K562 (cell line): ENCODE measurements at regions of chr2 and their contacts with region 1.

Region 1: GRCh38 chr2:241877989-241878970 is 8.8 kb downstream of the RTP5 start:
- DNase-seq: peak; percentile 62 to 85 (median 70)
- ATAC-seq: peak; percentile 59
- H3K4me3 ChIP-seq: no peak overlapping the region
- H3K27ac ChIP-seq: no peak overlapping the region
- H3K4me1 ChIP-seq: peaks cover 14 to 48% of the 10 kb centered on the region in 2 experiments; a peak in 4 of 5 replicates
- H3K27me3 ChIP-seq: no peaks in the 10 kb centered on the region
- CTCF ChIP-seq: peak; percentile 52 to 81 (median 67)
- EP300 ChIP-seq: no peak
- POLR2A ChIP-seq: no peak
- RAD21 ChIP-seq: peak; percentile 48 to 64

Region 2: DNA sequence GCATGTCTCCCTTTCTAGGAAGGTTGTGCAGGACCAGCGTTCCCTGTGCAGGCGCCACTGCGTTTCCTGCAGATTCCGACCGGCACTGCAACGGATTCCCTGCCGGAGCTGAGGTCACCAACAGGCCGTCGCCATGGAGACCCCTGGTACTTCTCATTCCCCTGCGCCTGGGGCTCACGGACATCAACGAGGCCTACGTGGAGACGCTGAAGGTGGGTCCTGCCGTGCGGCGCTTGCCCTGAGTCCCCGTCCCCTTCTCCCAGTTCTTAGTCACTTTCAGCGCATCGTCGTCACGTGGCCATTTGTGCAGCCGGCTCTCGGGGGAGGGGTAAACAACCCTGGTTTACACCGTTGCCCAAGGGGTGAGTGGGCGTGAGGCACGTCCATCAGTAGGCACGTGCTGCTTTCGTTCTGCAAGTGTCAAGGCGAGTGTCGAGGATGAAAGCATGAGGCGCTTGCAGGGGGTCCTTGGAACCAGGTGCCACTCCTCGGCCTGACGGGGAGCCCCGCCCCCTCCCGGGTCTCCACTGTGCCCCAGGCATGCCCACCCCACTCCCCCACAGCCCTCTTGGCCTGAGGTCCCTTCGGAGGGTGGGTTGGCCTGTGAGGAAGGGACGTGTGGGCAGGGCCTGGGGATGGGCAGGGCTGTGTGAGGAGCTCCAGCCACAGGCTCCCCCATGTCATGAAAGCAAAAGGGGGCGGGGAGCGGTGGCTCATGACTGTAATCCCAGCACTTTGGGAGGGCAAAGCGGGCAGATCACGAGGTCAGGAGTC is 211.5 kb before region 1 on chr2:
- CTCF ChIA-PET with region 1: no interaction called
- POLR2A ChIA-PET with region 1: no interaction called
- in situ Hi-C with region 1: no loop called
- intact Hi-C with region 1: loop called (anchors 5 kb)
- DNase-seq: no peak
- ATAC-seq: no peak
- H3K4me3 ChIP-seq: no peak overlapping the region
- H3K27ac ChIP-seq: no peak overlapping the region
- H3K4me1 ChIP-seq: peaks cover 0 to 5% of the 10 kb centered on the region in 2 experiments; a peak in 3 of 5 replicates
- H3K27me3 ChIP-seq: no peaks in the 10 kb centered on the region
- CTCF ChIP-seq: no peak
- EP300 ChIP-seq: no peak
- POLR2A ChIP-seq: no peak
- RAD21 ChIP-seq: no peak

Region 3: DNA sequence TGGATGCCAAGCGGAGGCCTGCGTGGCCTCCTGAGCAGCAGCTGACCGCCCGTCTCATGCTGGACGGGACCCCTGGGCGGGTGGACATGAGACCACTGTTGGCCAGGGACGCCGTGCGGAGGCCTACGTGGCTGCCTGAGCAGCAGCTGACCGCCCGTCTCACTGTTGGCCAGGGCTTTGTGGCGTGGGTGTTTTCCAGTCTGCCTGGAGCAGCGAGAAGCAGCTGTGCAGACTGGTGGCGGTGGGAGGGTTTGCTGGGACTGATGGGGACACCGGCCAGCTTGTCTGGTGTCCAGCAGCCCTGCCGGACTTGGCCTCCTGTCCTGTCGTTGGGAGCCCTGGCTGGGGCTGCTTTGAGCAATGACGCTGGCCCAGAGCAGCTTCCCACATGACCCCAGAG is 149.7 kb before region 1 on chr2:
- CTCF ChIA-PET with region 1: no interaction called
- POLR2A ChIA-PET with region 1: no interaction called
- in situ Hi-C with region 1: loop called (anchors 5 kb)
- intact Hi-C with region 1: loop called (anchors 5 kb)
- DNase-seq: no peak
- ATAC-seq: no peak
- H3K4me3 ChIP-seq: no peak overlapping the region
- H3K27ac ChIP-seq: no peak overlapping the region
- H3K4me1 ChIP-seq: peaks cover 4 to 21% of the 10 kb centered on the region in 2 experiments; a peak in 3 of 5 replicates
- H3K27me3 ChIP-seq: no peaks in the 10 kb centered on the region
- CTCF ChIP-seq: no peak
- EP300 ChIP-seq: no peak
- POLR2A ChIP-seq: no peak
- RAD21 ChIP-seq: no peak

Region 4: DNA sequence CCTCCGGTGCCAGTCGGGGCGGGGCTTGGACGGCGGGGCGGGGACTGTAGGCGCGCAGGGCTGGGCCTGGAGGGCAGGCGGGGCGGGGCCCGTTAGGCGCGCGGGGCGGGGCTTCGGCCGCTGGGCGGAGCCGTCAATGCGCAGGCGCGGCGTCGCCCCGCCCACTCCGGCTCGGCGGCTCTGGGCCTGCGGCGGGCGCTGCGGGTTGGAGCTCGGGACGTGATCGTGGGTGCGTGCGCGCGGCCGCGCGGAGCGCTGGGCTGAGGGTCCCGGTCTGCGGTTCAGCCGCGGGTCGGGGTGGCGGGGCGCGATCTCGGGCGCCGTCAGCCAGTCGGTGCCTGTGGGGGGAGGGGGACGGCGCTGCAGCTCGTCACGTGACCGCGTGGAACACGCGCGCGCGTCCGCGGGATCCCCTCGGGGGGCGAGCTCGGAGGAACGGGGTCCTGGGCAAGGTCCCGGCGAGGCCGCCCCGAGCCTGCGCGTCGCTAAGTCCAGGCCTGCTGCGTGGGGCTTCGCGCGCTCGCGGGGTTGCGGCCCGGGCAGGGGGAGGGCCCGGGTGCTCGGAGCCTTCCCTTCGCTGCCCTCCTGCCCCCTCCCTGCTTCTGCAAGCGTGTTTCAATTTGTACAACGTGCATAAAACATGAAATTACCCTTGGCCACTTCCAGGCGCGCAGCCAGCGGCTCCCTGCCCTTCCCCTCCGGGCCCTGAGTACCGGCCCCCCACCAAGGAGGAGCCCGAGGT is 143.6 kb before region 1 on chr2 and contains the start of gene D2HGDH:
- CTCF ChIA-PET with region 1: no interaction called
- POLR2A ChIA-PET with region 1: no interaction called
- in situ Hi-C with region 1: loop called (anchors 5 kb)
- intact Hi-C with region 1: loop called (anchors 5 kb)
- DNase-seq: peak; percentile 83 to 92 (median 90)
- ATAC-seq: peak; percentile 93
- H3K4me3 ChIP-seq: peak within 1 kb of the TSS; percentile 74
- H3K27ac ChIP-seq: peak within 1 kb of the TSS; percentile 88
- H3K4me1 ChIP-seq: peaks cover 4 to 48% of the 10 kb centered on the region in 2 experiments; a peak in 3 of 5 replicates
- H3K27me3 ChIP-seq: no peaks in the 10 kb centered on the region
- CTCF ChIP-seq: no peak
- EP300 ChIP-seq: no peak
- POLR2A ChIP-seq: peak; percentile 60
- RAD21 ChIP-seq: no peak
- polyA plus RNA-seq, gene D2HGDH: 0.39 to 0.52 TPM